ENCODE measurements at regions of chr2 and their contacts with region 1.

Region 1: DNA sequence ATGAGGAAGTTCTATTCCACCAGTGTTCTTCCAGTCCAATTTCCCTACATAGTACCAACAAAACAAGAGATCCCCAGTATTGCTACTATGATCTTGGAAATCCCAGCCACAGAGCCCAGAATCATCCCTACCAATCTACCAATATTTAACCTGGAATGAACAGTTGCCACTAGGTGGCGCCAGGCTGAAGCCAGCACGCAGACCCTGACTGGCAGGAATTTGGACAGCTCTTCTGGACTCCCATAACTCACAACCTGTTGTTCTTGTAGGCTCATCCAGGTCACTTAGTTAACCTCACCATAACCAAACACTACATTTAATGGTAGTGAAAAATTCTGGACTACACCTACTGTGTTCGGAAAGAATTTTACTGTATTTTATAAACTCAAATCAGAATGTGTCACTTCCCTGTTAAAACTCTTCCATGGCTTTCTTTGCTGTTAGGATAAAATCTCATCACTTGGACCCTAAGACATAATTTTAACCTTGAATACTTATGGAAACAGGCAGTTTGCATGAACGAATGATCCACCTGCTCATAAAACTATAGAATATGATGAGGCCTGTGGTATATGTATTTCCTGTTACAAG is 59.8 kb upstream of the SLC38A11 start:
- DNase-seq: peak; percentile 76
- ATAC-seq: peak; percentile 45
- H3K4me3 Mint-ChIP-seq: no peak overlapping the region
- H3K27ac Mint-ChIP-seq: no peak overlapping the region
- H3K4me1 Mint-ChIP-seq: no peaks in the 10 kb centered on the region
- H3K27me3 Mint-ChIP-seq: peaks cover 13% of the 10 kb centered on the region
- CTCF ChIP-seq: peak; percentile 73

Region 2: DNA sequence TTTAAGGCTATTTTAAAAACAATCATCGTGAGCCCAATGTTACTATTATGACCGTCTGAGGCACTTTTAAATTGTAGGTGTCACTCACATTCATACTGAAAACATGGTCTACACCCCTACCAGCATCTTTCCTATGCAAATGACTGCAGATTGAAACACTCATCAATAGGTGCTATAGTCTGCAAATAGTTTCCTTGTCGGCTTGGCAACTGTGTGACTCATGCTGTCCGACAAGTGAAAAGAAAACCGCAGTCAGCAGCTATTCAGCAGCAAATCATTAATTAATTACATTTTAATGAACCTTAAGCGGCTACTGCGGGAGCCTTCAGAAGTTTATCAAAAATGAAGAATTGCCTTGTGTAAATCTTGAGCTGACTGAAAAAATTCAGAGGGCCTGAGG is 1413.8 kb before region 1 on chr2:
- CTCF ChIA-PET with region 1: no interaction called
- POLR2A ChIA-PET with region 1: no interaction called
- intact Hi-C with region 1: no loop called
- DNase-seq: no peak
- ATAC-seq: no peak
- H3K4me3 Mint-ChIP-seq: no peak overlapping the region
- H3K27ac Mint-ChIP-seq: no peak overlapping the region
- H3K4me1 Mint-ChIP-seq: no peaks in the 10 kb centered on the region
- H3K27me3 Mint-ChIP-seq: no peaks in the 10 kb centered on the region
- CTCF ChIP-seq: no peak

Region 3: DNA sequence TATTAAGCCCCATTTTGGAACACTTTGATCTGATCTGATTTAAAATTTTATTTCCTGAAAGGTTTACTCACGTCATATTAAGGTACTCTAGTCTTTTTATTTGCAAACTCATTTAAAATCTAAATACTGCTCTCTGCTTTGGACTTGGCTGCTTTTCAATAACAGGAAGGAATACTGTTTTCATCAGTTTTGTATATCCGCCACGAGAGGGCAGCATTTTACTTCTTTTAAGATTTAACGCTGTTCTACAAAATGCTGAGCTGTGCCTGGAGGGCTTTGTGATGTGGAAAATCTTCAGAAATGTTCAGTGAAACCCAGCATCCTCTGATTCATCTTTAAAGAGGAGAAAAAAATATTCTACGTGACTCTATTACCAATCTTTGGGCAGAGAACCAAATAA is 22.3 kb before region 1 on chr2:
- CTCF ChIA-PET with region 1: interaction called, 32 read pairs
- POLR2A ChIA-PET with region 1: no interaction called
- intact Hi-C with region 1: no loop called
- DNase-seq: peak; percentile 65
- ATAC-seq: peak; percentile 58
- H3K4me3 Mint-ChIP-seq: no peak overlapping the region
- H3K27ac Mint-ChIP-seq: no peak overlapping the region
- H3K4me1 Mint-ChIP-seq: peaks cover 15% of the 10 kb centered on the region
- H3K27me3 Mint-ChIP-seq: no peaks in the 10 kb centered on the region
- CTCF ChIP-seq: peak; percentile 71

Region 4: GRCh38 chr2:165203689-165204559 is 188.8 kb after region 1 on chr2 and contains the start of gene SCN3A:
- CTCF ChIA-PET with region 1: interaction called, 25 read pairs
- POLR2A ChIA-PET with region 1: no interaction called
- intact Hi-C with region 1: loop called (anchors 1 kb)
- DNase-seq: peak; percentile 19
- ATAC-seq: no peak
- H3K4me3 Mint-ChIP-seq: no peak within 1 kb of the TSS
- H3K27ac Mint-ChIP-seq: no peak within 1 kb of the TSS
- H3K4me1 Mint-ChIP-seq: no peaks in the 10 kb centered on the region
- H3K27me3 Mint-ChIP-seq: no peaks in the 10 kb centered on the region
- CTCF ChIP-seq: peak; percentile 77
- total RNA-seq, gene SCN3A: 0.07 TPM in 1 of 2 experiments, not detected in the other

Region 5: GRCh38 chr2:165293440-165294353 is 278.6 kb after region 1 on chr2:
- CTCF ChIA-PET with region 1: interaction called, 5 read pairs
- POLR2A ChIA-PET with region 1: no interaction called
- intact Hi-C with region 1: loop called (anchors 10 kb)
- DNase-seq: peak; percentile 49
- ATAC-seq: peak; percentile 100
- H3K4me3 Mint-ChIP-seq: no peak overlapping the region
- H3K27ac Mint-ChIP-seq: no peak overlapping the region
- H3K4me1 Mint-ChIP-seq: peaks cover 5% of the 10 kb centered on the region
- H3K27me3 Mint-ChIP-seq: peaks cover 7% of the 10 kb centered on the region
- CTCF ChIP-seq: peak; percentile 72